Adrenal gland (tissue), 19 donors: ENCODE measurements at regions of chr20 and their contacts with region 1.

Region 1: GRCh38 chr20:35146920-35147574 is at the start of gene EDEM2:
- DNase-seq: peak; percentile 92 to 97 (median 95)
- H3K4me3 ChIP-seq: peak within 1 kb of the TSS; percentile 12 to 88 (median 62)
- H3K27ac ChIP-seq: peak within 1 kb of the TSS; percentile 12 to 88 (median 59)
- H3K4me1 ChIP-seq: peaks cover 10 to 24% of the 10 kb centered on the region in 2 donors
- H3K27me3 ChIP-seq: no peaks in the 10 kb centered on the region
- CTCF ChIP-seq: no peak
- POLR2A ChIP-seq: peak in 1 of 2 donors; percentile 73
- total RNA-seq, gene EDEM2: 29.3 to 62.5 (median 38.1) TPM

Region 2: DNA sequence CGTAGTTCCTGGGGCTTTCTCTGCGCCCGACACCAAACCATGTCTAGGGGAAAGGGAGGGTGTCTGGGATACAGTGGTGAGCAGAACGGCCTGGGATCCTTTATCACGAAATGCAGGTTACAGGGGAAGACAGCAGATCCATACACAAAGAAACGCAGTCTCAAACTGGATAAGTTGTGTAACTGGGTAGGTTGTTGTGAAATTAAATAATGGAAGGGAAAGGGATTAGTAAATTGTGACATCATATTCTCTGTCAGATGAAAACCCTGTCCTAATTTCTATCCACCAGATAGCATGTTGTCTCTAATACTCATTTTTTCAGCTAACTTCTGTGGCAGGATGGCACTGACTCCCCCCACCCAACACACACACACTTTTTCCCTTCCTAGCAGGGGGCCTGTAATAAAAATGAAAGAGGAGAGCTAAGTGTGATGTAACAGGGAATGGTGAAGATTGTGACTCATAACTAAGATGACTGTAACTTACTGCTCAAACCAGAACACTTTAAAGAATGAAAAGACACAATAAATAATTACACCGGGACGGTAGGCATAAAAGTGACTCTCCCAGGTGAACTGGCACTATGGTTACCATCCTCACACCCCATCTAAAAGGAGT is 53.7 kb before region 1 on chr20:
- intact Hi-C with region 1: no loop called
- DNase-seq: no peak
- H3K4me3 ChIP-seq: peak overlapping the region in 1 of 4 donors; percentile 85
- H3K27ac ChIP-seq: peak overlapping the region; percentile 74 to 95 (median 93)
- H3K4me1 ChIP-seq: peaks cover 19 to 39% of the 10 kb centered on the region in 2 donors
- H3K27me3 ChIP-seq: no peaks in the 10 kb centered on the region
- CTCF ChIP-seq: no peak
- POLR2A ChIP-seq: no peak

Region 3: DNA sequence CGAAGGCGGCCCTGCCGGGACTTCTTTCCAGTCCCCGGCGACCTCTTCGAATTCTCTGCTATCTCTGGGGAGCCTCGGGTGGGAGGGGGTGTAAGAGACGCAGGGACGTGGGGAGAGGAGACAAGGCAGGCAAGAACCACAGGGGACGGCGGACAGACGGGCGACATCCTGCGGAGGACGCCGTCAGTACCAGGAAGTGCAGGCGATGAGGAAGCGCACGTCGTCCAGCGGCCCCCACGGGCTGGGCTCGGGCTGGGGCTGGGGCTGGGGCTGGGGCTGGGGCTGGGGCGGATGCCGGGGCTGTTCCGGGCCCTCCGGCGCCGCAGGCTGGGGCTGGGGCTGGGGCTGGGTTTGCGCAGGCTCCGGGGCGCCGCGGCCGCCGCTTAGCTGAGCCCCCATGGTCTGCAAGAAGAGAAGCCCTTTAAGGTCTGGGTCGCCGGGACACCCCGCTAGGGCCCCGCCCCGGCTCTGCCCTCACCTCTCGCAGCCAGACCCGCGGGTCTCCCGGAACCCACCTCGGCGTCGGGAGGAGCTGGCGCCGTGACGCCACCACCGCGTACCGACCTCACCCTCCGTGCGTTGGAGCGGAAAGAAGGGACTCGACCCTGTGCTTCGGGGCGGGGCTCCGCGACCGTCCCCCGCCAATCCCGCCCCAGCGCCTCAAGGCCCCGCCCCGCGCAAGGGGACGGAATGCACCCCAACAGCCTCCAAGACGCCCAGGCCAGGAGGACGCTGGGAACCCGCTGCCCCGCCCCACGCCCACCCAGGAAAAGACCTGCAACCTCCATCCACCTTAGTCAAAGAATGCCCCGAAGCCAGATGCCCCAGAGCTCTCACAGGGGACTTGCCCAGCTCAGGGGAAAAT is 130.7 kb after region 1 on chr20 and contains the start of gene MMP24OS:
- intact Hi-C with region 1: loop called in 1 of 2 experiments (anchors 10 kb)
- DNase-seq: peak; percentile 92 to 95 (median 94)
- H3K4me3 ChIP-seq: peak within 1 kb of the TSS; percentile 50 to 86 (median 74)
- H3K27ac ChIP-seq: peak within 1 kb of the TSS; percentile 83 to 100 (median 95)
- H3K4me1 ChIP-seq: peaks cover 26 to 48% of the 10 kb centered on the region in 2 donors
- H3K27me3 ChIP-seq: no peaks in the 10 kb centered on the region
- CTCF ChIP-seq: peak in 2 of 6 experiments; percentile 1 to 5
- POLR2A ChIP-seq: peak; percentile 92 to 97
- total RNA-seq, gene MMP24OS: 24.8 to 141 (median 54.9) TPM

Region 4: DNA sequence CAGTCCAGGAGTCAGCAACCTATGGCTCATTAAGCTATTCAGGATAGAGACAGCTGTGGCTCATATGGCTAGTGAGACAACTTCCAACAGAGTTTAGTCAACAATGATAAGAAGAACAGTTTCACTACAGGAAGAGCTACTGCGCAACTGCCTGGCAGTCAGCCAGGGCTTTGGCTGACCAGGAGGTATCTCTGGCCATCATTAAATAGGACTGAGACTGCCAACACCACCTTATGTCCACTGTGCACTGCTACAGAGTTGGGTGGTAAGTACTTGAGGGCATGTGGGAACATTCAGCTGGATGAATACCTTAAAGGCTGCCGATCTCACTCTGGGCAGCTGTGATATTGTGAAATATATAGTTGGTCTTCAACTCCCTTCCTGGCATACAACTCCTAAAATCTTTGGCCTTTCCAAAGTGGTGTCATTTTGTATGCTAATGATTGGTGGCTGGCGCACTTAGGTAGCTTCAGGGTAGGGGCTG is 197.3 kb after region 1 on chr20:
- intact Hi-C with region 1: no loop called
- DNase-seq: peak; percentile 34 to 80 (median 76)
- H3K4me3 ChIP-seq: no peak overlapping the region
- H3K27ac ChIP-seq: peak overlapping the region in 3 of 5 donors; percentile 0 to 72 (median 49)
- H3K4me1 ChIP-seq: peaks cover 0 to 10% of the 10 kb centered on the region in 2 donors
- H3K27me3 ChIP-seq: no peaks in the 10 kb centered on the region
- CTCF ChIP-seq: no peak
- POLR2A ChIP-seq: no peak